ENCODE measurements at regions of chr12 and their contacts with region 1.

Region 1: DNA sequence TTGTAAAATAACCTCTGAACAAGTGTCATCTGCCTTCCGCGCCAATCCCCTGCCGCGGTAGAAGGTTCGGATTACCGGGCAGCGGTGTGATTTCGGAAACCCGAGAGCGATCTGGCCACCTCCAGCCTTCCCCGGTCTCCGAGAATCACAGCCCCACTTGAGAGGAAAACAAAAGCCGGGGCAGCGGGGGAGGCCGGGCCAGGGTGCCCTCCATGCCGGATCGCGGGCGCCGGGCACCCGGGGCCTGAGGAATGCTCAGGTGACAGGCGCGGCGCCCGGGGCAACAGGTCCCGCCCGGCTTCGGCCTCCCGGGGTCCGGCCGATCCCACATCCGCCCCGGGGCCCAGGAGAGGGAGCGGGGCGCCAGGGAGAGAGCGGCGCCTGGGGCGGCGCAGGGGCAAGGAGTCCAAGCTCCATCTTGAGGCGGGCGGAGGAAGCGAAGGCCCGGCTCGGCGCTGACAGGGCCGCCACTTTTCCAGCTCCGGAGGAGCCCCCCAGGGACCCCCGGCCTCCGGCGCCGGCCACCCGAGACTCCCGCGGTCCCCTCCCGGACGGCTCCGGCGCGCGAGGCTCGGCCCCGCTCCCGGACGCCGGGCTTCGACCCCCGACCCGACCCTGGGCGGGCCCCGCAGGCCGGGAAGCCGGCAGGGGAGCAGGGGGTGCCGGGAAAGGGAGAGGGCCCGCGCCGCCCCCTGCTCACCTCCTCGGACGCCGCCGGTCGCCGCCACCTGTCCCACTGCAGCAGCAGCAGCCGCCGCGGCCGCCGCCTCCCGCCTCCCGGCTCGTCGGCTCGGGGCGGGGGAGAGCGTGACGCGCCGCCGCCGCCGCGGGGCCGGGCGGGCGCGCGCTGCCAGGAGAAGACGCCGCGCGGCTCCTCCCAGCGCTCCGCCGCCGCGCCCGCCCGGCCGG is at the start of gene CLIP1:
- DNase-seq: peak; percentile 71 to 84 (median 76)
- ATAC-seq: peak; percentile 87
- H3K4me3 ChIP-seq: peak within 1 kb of the TSS; percentile 72
- H3K27ac ChIP-seq: peak within 1 kb of the TSS; percentile 80
- H3K4me1 ChIP-seq: peaks cover 26 to 31% of the 10 kb centered on the region in 2 experiments
- H3K27me3 ChIP-seq: no peaks in the 10 kb centered on the region
- CTCF ChIP-seq: peak; percentile 46 to 84 (median 59); a peak in 4 of 6 replicates
- EP300 ChIP-seq: no peak
- POLR2A ChIP-seq: no peak; the same call in 1 of the 2 replicates
- RAD21 ChIP-seq: peak; percentile 64 to 68
- polyA plus RNA-seq, gene CLIP1: 5.8 to 6.1 TPM

Region 2: GRCh38 chr12:121955258-121956235 is 466.5 kb before region 1 on chr12:
- CTCF ChIA-PET with region 1: no interaction called
- POLR2A ChIA-PET with region 1: no interaction called
- in situ Hi-C with region 1: no loop called
- intact Hi-C with region 1: no loop called
- DNase-seq: peak in 3 of 4 experiments; percentile 30 to 41 (median 39)
- ATAC-seq: peak; percentile 78
- H3K4me3 ChIP-seq: no peak overlapping the region
- H3K27ac ChIP-seq: no peak overlapping the region
- H3K4me1 ChIP-seq: no peaks in the 10 kb centered on the region
- H3K27me3 ChIP-seq: no peaks in the 10 kb centered on the region
- CTCF ChIP-seq: peak; percentile 45 to 57 (median 56)
- EP300 ChIP-seq: no peak
- POLR2A ChIP-seq: no peak
- RAD21 ChIP-seq: peak in 1 of 2 experiments; percentile 45; a peak in 2 of 4 replicates

Region 3: DNA sequence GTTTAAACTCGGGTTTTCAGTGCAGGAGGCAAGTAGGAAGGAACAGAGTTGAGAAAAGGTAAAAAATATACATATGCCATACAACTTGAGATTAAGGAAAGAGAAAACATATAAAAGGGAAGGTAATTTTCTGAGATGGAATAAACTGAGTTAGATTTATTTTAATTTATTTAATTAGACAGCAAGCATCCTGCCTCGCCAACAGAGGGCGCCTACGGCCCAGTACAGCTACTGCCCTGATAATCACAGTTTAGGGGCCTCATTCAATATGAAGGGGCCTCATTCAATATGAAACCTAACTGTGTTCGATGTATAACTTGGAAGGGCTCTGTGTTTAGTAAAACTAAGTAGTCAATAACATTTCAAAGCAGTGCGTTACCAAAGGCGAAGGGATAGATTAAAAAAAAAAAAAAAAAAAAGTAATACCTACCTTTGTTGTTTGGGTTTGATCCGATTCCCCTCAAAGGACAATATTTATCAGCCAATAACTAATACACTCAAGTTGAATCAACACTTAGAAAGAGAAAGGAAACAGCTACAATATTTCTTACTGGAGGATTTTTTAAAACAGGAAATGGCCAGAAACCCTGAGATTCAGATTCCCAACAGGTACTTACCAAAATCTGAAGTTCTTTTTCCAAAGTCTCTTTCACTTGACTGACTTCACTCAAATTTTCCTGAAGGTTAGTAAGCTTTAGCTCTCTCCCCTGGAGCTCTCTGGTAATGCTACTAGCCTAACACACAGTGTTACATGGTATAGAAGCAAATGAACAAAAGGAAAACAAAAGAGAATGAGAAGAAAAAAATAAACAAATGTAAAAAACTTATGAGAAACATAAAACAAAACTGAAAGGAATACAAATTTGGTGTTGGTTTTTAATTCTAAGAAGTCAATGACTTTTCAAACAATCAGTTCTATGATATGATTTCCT is 85.8 kb before region 1 on chr12:
- CTCF ChIA-PET with region 1: interaction called, 12 read pairs
- POLR2A ChIA-PET with region 1: no interaction called
- in situ Hi-C with region 1: no loop called
- intact Hi-C with region 1: loop called (anchors 5 kb)
- DNase-seq: peak; percentile 33 to 62 (median 50)
- ATAC-seq: peak; percentile 20; the same call in 1 of the 3 replicates
- H3K4me3 ChIP-seq: no peak overlapping the region
- H3K27ac ChIP-seq: peak overlapping the region; percentile 32; the same call in 1 of the 3 replicates
- H3K4me1 ChIP-seq: peaks cover 4 to 19% of the 10 kb centered on the region in 2 experiments; a peak in 4 of 5 replicates
- H3K27me3 ChIP-seq: no peaks in the 10 kb centered on the region
- CTCF ChIP-seq: peak; percentile 81 to 92 (median 82)
- EP300 ChIP-seq: no peak
- POLR2A ChIP-seq: no peak
- RAD21 ChIP-seq: peak; percentile 49 to 70

Region 4: DNA sequence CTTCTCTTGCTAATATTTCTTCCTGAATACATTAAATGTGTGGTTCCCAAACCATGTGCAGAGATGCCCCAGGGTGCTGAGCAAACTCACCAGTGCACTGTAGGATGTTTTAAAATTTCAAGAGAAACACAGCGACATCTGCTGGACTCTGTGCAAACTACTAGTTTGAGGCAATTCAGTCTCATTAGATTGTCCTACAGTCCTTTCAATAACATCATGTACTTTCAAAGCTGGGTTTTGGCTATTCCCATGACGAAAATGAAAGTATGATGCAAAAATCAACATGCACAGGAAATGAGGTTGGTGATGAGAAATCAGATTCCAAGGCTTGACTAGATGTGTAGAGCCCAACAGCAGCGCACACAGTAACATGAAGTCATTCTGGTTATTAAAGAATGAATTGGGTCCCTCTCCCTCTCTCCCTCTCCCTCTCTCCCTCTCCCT is 65.9 kb before region 1 on chr12:
- CTCF ChIA-PET with region 1: no interaction called
- POLR2A ChIA-PET with region 1: no interaction called
- in situ Hi-C with region 1: no loop called
- intact Hi-C with region 1: no loop called
- DNase-seq: peak; percentile 33 to 69 (median 56)
- ATAC-seq: peak; percentile 98
- H3K4me3 ChIP-seq: no peak overlapping the region
- H3K27ac ChIP-seq: no peak overlapping the region
- H3K4me1 ChIP-seq: no peaks in the 10 kb centered on the region
- H3K27me3 ChIP-seq: no peaks in the 10 kb centered on the region
- CTCF ChIP-seq: peak; percentile 60 to 82 (median 82)
- EP300 ChIP-seq: no peak
- POLR2A ChIP-seq: no peak
- RAD21 ChIP-seq: peak; percentile 72 to 74

Region 5: DNA sequence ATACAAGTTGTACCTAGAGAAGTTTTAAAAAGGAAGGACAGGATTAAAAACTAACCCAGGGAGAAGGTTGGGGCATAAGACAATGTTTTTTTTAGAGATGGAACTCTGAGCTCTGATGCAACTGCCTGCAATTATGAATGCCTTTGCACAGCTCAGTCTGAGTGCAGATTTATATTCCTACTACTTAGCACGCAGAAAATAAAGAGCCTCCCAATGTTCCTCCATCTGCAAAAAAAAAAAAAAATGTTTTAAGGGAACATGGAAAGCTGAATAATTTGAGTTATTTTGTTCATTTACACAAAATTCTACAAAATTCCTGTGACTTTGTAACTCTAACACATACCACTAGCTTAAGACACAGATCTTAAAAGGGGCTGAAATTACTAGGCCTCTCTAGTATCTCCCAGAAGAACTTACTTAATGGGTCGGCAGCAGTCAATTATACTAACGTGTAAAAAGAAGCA is 15.3 kb before region 1 on chr12:
- CTCF ChIA-PET with region 1: no interaction called
- POLR2A ChIA-PET with region 1: interaction called, 26 read pairs
- in situ Hi-C with region 1: no loop called
- intact Hi-C with region 1: no loop called
- DNase-seq: peak in 1 of 4 experiments; percentile 35
- ATAC-seq: peak; percentile 85
- H3K4me3 ChIP-seq: no peak overlapping the region
- H3K27ac ChIP-seq: peak overlapping the region; percentile 33; the same call in 1 of the 3 replicates
- H3K4me1 ChIP-seq: peaks cover 4 to 10% of the 10 kb centered on the region in 2 experiments; a peak in 3 of 5 replicates
- H3K27me3 ChIP-seq: no peaks in the 10 kb centered on the region
- CTCF ChIP-seq: no peak
- EP300 ChIP-seq: peak; percentile 79
- POLR2A ChIP-seq: no peak
- RAD21 ChIP-seq: no peak

Region 6: DNA sequence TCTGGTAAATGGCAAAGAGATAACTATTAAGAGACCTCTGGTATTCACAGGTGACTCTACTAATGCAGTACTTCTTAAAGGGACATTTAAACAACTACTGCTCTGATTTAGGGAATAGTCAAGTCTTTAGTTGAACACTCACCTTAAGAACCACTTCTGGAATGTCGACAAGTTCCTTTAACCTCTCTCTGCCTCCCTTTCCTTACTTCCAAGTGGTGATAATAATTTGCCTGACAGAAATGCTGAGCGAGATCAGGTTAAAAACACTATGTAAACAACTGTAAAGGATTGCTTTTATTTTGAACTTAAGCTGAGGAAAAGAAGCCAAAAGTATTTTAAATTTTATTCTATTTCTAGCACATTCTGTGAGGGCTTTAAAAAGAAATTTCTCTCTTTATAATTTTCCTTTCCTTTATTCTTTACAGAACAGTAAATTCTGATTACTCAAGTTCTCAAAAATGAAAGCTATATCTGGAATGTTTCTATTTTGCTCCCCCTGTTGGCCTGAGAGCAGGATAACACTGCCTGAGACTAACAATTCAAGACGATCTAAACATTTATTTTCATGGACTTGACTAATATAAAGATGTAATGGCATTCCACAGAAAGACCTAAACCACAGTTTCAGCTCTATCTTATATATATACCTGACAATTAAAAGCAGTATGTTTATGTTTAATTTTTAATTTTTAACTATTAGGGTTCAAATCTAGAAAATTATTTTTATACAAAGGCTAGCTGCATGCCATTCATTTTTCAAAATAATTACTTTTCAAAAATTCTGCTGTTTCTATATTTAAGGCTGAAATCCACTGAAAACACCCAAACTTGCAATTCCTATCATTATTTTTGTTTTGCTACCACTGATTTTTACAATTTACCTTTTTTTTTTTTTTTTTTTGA is 49.5 kb after region 1 on chr12:
- CTCF ChIA-PET with region 1: interaction called, 3 read pairs
- POLR2A ChIA-PET with region 1: interaction called, 3 read pairs
- in situ Hi-C with region 1: no loop called
- intact Hi-C with region 1: loop called (anchors 2 kb)
- DNase-seq: peak; percentile 35 to 71 (median 49)
- ATAC-seq: peak; percentile 75
- H3K4me3 ChIP-seq: no peak overlapping the region
- H3K27ac ChIP-seq: peak overlapping the region; percentile 8; the same call in 1 of the 3 replicates
- H3K4me1 ChIP-seq: peaks cover 0 to 5% of the 10 kb centered on the region in 2 experiments; a peak in 1 of 5 replicates
- H3K27me3 ChIP-seq: no peaks in the 10 kb centered on the region
- CTCF ChIP-seq: peak; percentile 57 to 79 (median 59); a peak in 5 of 6 replicates
- EP300 ChIP-seq: no peak
- POLR2A ChIP-seq: no peak
- RAD21 ChIP-seq: peak; percentile 87 to 89

Measured in K562 (cell line).